ENCODE measurements at regions of chr16 and their contacts with region 1.

Region 1: DNA sequence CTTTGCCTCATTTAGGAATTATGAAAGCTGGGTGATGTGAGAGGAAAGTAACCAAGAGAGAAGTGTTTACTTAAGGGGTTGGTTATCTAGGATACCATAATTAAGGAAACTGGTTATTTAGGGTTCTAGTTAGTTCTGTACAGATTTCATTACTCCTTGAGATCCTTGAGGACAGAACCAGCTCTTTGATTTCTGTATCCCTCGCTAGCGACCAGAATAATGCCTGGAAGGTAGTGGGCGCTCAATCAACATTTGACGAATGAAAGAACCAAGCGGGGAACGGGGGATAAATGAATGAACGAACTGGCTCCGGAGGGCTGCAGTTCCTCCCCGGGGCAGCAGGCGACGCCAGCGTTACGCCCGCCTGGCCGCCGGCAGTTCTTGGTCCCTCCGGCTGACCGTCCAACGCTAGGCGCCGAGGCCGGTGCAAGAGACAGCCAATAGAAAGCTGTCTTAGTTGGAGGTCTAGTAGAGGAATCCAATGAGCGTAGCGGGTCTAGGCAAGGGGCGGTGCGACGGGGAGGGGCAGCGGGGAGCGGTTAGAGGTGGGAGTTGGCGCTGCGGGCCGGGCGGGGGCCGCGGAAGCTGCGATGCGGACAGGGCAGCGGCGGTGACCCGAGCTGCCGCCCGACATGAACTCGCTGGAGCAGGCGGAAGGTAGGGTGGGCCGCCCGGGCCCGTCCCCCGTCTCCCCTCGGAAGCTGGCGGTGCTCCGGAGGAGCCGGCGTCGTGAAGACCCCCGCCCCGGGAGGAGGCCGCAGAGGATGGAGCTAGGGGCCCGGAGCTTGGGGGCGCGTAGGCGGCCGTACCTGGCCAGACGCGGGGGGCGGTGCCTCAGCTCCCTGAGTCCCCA is at the start of gene CNEP1R1:
- DNase-seq: peak; percentile 95 to 98 (median 97)
- H3K4me3 ChIP-seq: peak within 1 kb of the TSS; percentile 73 to 98 (median 96)
- H3K27ac ChIP-seq: peak within 1 kb of the TSS; percentile 46 to 82
- H3K4me1 ChIP-seq: peaks cover 8 to 19% (median 11%) of the 10 kb centered on the region in 4 experiments
- H3K27me3 ChIP-seq: peaks cover 0 to 2% (median 0%) of the 10 kb centered on the region in 5 experiments

Region 2: DNA sequence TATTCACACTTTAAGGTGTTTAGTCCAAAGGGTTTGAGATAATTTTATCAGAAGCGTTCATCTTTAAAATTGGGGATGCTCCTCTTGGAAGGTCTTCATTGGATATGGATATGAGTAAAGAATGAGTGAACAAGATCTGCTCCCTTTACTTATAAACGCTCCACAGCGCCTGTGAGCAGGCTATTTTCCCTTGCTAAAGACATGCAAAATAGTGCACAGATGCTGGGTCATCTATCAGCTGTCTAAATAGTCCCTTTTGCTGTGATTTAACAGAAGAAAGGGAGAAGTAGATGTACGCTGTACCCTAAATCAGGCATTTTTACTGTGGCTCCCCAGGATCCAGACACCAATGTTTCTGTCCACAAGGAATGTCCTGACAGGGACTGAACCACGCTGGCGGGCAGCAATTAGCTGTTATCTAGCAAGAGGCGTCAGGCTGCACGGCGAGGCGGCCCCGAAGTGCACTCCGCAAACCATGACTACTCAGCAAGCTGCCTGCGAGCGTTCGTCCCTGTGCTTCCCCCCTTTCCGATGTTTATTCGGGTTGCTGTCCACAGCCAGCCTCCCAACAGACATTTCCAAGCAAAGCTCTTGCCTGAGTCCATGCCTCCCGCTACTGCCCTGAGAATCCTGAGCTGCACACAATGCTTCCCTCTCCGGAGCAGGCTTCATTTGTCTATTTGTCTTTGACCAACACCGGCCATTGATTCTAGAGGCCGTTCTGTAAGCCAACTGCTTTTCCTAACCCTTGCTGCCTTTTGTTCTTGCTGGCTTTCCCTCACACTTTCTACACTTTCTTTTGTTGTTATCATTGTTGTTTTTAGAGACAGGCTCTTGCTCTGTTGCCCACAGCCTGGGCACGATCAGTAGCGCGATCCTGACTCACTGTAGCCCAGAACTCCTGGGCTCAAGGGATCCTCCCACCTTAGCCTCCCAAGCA is 55.5 kb before region 1 on chr16:
- CTCF ChIA-PET with region 1: no interaction called
- POLR2A ChIA-PET with region 1: no interaction called
- DNase-seq: no peak
- H3K4me3 ChIP-seq: no peak overlapping the region
- H3K27ac ChIP-seq: no peak overlapping the region
- H3K4me1 ChIP-seq: no peaks in the 10 kb centered on the region
- H3K27me3 ChIP-seq: peaks cover 0 to 22% (median 10%) of the 10 kb centered on the region in 5 experiments

Region 3: DNA sequence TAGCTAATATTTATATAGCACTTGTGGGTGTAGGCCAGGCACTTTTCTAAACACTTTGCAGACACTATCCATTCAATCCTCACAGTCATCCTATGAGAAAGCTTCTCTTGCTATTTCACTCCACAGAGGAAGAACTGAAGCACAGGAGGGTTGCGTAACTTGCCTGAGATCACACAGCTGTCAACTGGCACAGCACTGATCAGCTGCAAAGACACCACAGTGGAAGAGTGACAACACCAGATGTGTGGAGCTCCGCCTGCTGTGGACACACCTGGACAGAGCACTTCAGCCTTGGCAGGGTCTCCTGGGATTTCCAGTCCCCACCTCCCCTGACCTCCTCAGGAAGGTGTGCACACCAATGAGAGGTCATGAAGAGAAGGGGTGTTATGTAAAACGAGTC is 13.2 kb before region 1 on chr16:
- CTCF ChIA-PET with region 1: interaction called, 11 read pairs
- POLR2A ChIA-PET with region 1: no interaction called
- DNase-seq: no peak
- H3K4me3 ChIP-seq: no peak overlapping the region
- H3K27ac ChIP-seq: no peak overlapping the region
- H3K4me1 ChIP-seq: no peaks in the 10 kb centered on the region
- H3K27me3 ChIP-seq: no peaks in the 10 kb centered on the region

Region 4: GRCh38 chr16:50038756-50039529 is 14.0 kb after region 1 on chr16:
- CTCF ChIA-PET with region 1: interaction called, 41 read pairs
- POLR2A ChIA-PET with region 1: interaction called, 3 read pairs
- DNase-seq: peak; percentile 42 to 78 (median 70)
- H3K4me3 ChIP-seq: no peak overlapping the region
- H3K27ac ChIP-seq: no peak overlapping the region
- H3K4me1 ChIP-seq: peaks cover 13 to 36% (median 27%) of the 10 kb centered on the region in 4 experiments
- H3K27me3 ChIP-seq: no peaks in the 10 kb centered on the region

Region 5: GRCh38 chr16:50065624-50066481 is 40.9 kb after region 1 on chr16 and contains the start of gene HEATR3:
- CTCF ChIA-PET with region 1: interaction called, 16 read pairs
- POLR2A ChIA-PET with region 1: no interaction called
- DNase-seq: peak; percentile 89 to 95 (median 95)
- H3K4me3 ChIP-seq: peak within 1 kb of the TSS; percentile 80 to 91 (median 83)
- H3K27ac ChIP-seq: peak within 1 kb of the TSS in 1 of 2 experiments; percentile 54
- H3K4me1 ChIP-seq: peaks cover 1 to 22% (median 20%) of the 10 kb centered on the region in 4 experiments
- H3K27me3 ChIP-seq: no peaks in the 10 kb centered on the region